ENCODE measurements at regions of chr4 and their contacts with region 1.

Region 1: DNA sequence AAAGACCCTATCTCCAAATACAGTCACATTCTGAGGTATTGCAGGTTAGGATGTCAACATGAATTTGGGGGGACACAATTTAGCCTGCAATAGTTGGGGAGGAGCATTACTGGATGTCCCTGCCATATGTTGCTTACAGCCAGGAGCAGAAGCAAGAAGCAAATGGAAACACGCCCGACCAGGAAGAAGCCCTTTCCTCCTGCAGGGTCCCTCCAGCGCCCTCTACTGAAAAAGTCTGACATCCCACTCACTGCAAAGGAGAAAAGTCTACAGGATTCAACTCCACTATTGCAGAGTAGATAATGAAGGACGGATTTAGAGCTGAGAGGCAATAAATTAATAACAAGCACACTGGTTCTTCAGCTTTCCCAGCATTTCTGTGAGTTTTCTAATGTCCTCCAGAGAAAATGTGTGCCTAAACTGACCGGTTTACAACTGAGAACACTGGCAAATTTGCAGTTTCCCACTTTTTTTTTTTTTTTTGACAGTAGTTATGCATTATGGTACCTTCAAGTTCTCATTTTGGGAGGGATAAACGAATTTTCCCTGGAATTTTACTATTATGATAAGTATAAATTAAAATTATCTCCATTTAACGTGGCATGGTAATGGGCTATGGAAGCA is 31.7 kb downstream of the COQ2 start:
- DNase-seq: peak; percentile 78 to 81 (median 80)
- H3K4me3 ChIP-seq: no peak overlapping the region
- H3K4me3 Mint-ChIP-seq: peak overlapping the region in 4 of 8 donors; percentile 39 to 50 (median 44)
- H3K27ac ChIP-seq: no peak overlapping the region
- H3K27ac Mint-ChIP-seq: peak overlapping the region in 6 of 7 donors; percentile 41 to 78 (median 72)
- H3K4me1 ChIP-seq: peaks cover 23% of the 10 kb centered on the region
- H3K4me1 Mint-ChIP-seq: peaks cover 13 to 29% (median 16%) of the 10 kb centered on the region in 4 donors
- H3K27me3 ChIP-seq: no peaks in the 10 kb centered on the region
- H3K27me3 Mint-ChIP-seq: no peaks in the 10 kb centered on the region

Region 2: GRCh38 chr4:82611982-82612381 is 640.9 kb before region 1 on chr4:
- CTCF ChIA-PET with region 1: no interaction called
- POLR2A ChIA-PET with region 1: no interaction called
- intact Hi-C with region 1: no loop called
- DNase-seq: no peak
- H3K4me3 ChIP-seq: no peak overlapping the region
- H3K4me3 Mint-ChIP-seq: no peak overlapping the region
- H3K27ac ChIP-seq: no peak overlapping the region
- H3K27ac Mint-ChIP-seq: no peak overlapping the region
- H3K4me1 ChIP-seq: no peaks in the 10 kb centered on the region
- H3K4me1 Mint-ChIP-seq: no peaks in the 10 kb centered on the region
- H3K27me3 ChIP-seq: no peaks in the 10 kb centered on the region
- H3K27me3 Mint-ChIP-seq: peaks cover 2 to 8% of the 10 kb centered on the region in 2 donors

Region 3: DNA sequence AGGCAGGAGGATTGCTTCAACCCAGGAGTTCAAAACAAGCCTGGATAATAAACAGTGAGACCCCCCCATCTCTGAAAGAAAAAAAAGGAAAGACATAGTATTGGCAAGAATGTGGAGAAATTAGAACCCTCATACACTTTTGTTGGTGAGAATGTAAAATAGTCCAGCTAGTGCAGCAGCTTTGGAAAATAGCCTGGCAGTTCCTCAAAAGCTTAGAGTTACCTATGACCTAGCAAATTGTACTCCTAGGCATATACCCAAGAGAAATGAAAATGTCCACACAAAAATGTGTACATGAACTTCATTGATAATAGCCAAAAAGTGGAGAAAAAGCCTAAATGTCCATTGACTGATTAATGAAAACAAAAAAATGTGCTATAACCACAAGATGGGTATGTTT is 331.1 kb before region 1 on chr4:
- CTCF ChIA-PET with region 1: no interaction called
- POLR2A ChIA-PET with region 1: no interaction called
- intact Hi-C with region 1: no loop called
- DNase-seq: no peak
- H3K4me3 ChIP-seq: no peak overlapping the region
- H3K4me3 Mint-ChIP-seq: no peak overlapping the region
- H3K27ac ChIP-seq: no peak overlapping the region
- H3K27ac Mint-ChIP-seq: peak overlapping the region in 1 of 7 donors; percentile 70
- H3K4me1 ChIP-seq: no peaks in the 10 kb centered on the region
- H3K4me1 Mint-ChIP-seq: no peaks in the 10 kb centered on the region
- H3K27me3 ChIP-seq: no peaks in the 10 kb centered on the region
- H3K27me3 Mint-ChIP-seq: no peaks in the 10 kb centered on the region

Region 4: GRCh38 chr4:83074086-83074704 is 178.7 kb before region 1 on chr4:
- CTCF ChIA-PET with region 1: interaction called, 123 read pairs
- POLR2A ChIA-PET with region 1: interaction called, 3 read pairs
- intact Hi-C with region 1: loop called (anchors 1 kb)
- DNase-seq: peak; percentile 84 to 89 (median 85)
- H3K4me3 ChIP-seq: no peak overlapping the region
- H3K4me3 Mint-ChIP-seq: peak overlapping the region; percentile 59 to 83 (median 74)
- H3K27ac ChIP-seq: no peak overlapping the region
- H3K27ac Mint-ChIP-seq: peak overlapping the region; percentile 43 to 85 (median 63)
- H3K4me1 ChIP-seq: no peaks in the 10 kb centered on the region
- H3K4me1 Mint-ChIP-seq: peaks cover 4 to 14% (median 5%) of the 10 kb centered on the region in 4 donors
- H3K27me3 ChIP-seq: no peaks in the 10 kb centered on the region
- H3K27me3 Mint-ChIP-seq: no peaks in the 10 kb centered on the region

Region 5: GRCh38 chr4:83097018-83097417 is 155.9 kb before region 1 on chr4:
- CTCF ChIA-PET with region 1: interaction called, 19 read pairs
- POLR2A ChIA-PET with region 1: no interaction called
- intact Hi-C with region 1: no loop called
- DNase-seq: no peak
- H3K4me3 ChIP-seq: no peak overlapping the region
- H3K4me3 Mint-ChIP-seq: peak overlapping the region in 3 of 8 donors; percentile 22 to 37 (median 31)
- H3K27ac ChIP-seq: no peak overlapping the region
- H3K27ac Mint-ChIP-seq: peak overlapping the region in 5 of 7 donors; percentile 14 to 78 (median 44)
- H3K4me1 ChIP-seq: peaks cover 36% of the 10 kb centered on the region
- H3K4me1 Mint-ChIP-seq: peaks cover 27 to 69% (median 43%) of the 10 kb centered on the region in 4 donors
- H3K27me3 ChIP-seq: no peaks in the 10 kb centered on the region
- H3K27me3 Mint-ChIP-seq: no peaks in the 10 kb centered on the region

Region 6: DNA sequence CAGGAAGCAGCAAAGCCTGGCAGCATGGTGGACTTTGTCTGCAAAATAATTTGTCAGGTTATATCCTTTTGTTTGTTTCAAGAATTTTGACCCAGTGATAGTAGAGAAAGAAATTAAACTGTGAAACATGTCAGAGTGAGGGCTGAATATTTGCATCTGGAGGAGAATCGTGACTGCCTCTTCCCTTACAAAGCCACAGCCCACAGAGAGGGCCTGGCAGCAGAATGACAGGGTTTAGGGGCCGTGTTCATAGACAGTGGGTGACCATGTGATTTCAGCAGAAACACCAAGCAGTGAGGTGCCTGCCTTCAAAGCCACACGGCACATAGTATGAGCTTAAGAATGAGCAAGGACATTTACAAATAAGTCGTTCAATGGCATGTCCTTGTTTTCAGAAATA is 113.9 kb before region 1 on chr4:
- CTCF ChIA-PET with region 1: interaction called, 13 read pairs
- POLR2A ChIA-PET with region 1: no interaction called
- intact Hi-C with region 1: no loop called
- DNase-seq: no peak
- H3K4me3 ChIP-seq: no peak overlapping the region
- H3K4me3 Mint-ChIP-seq: no peak overlapping the region
- H3K27ac ChIP-seq: no peak overlapping the region
- H3K27ac Mint-ChIP-seq: peak overlapping the region in 5 of 7 donors; percentile 48 to 74 (median 66)
- H3K4me1 ChIP-seq: peaks cover 12% of the 10 kb centered on the region
- H3K4me1 Mint-ChIP-seq: peaks cover 13 to 26% (median 17%) of the 10 kb centered on the region in 4 donors
- H3K27me3 ChIP-seq: no peaks in the 10 kb centered on the region
- H3K27me3 Mint-ChIP-seq: no peaks in the 10 kb centered on the region

Region 7: DNA sequence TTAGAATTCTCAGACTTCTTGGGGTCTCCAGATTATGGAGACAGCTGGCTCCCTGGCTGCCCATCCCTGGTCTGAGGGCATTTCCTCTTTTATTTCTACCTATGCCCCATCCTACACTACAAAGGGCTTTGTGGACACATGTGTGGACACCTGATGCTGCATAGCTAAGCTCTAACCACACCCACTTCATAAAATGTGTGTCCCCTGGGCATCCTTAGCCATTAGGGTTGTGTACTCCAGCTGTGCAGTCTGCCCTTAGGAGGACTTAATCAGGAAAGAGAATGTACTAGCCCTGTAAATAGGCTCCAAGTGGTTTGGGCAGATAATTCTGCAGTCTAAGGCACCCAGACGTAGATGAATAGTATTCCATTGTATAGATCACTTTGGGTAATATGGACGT is 15.3 kb before region 1 on chr4:
- CTCF ChIA-PET with region 1: interaction called, 12 read pairs
- POLR2A ChIA-PET with region 1: interaction called, 4 read pairs
- intact Hi-C with region 1: no loop called
- DNase-seq: no peak
- H3K4me3 ChIP-seq: no peak overlapping the region
- H3K4me3 Mint-ChIP-seq: peak overlapping the region in 1 of 8 donors; percentile 12
- H3K27ac ChIP-seq: no peak overlapping the region
- H3K27ac Mint-ChIP-seq: no peak overlapping the region
- H3K4me1 ChIP-seq: peaks cover 41% of the 10 kb centered on the region
- H3K4me1 Mint-ChIP-seq: peaks cover 38 to 60% (median 49%) of the 10 kb centered on the region in 4 donors
- H3K27me3 ChIP-seq: no peaks in the 10 kb centered on the region
- H3K27me3 Mint-ChIP-seq: peaks cover 0 to 2% of the 10 kb centered on the region in 2 donors

Region 8: GRCh38 chr4:83890816-83891215 is 637.9 kb after region 1 on chr4:
- CTCF ChIA-PET with region 1: no interaction called
- POLR2A ChIA-PET with region 1: no interaction called
- intact Hi-C with region 1: no loop called
- DNase-seq: no peak
- H3K4me3 ChIP-seq: no peak overlapping the region
- H3K4me3 Mint-ChIP-seq: no peak overlapping the region
- H3K27ac ChIP-seq: no peak overlapping the region
- H3K27ac Mint-ChIP-seq: no peak overlapping the region
- H3K4me1 ChIP-seq: no peaks in the 10 kb centered on the region
- H3K4me1 Mint-ChIP-seq: no peaks in the 10 kb centered on the region
- H3K27me3 ChIP-seq: no peaks in the 10 kb centered on the region
- H3K27me3 Mint-ChIP-seq: peaks cover 0 to 11% of the 10 kb centered on the region in 2 donors

Region 9: DNA sequence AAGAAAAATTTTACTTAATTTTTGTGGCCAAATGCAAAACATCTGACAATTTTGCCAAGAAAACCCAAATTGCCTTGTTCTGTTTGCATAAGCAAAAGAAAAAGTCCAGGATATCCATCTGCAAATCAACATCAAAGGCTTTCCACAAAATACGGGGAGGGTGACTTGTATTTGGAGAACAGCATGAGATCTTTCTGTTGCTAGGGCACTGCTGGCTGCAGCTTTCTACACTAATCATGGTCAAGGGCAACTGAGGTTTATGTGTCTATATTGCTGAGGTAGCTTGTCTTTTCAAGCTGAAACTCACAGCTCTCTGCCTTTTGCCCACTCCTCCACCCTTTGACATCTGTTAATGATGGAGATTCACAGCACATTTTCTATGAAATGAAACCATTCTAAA is 857.1 kb after region 1 on chr4:
- CTCF ChIA-PET with region 1: no interaction called
- POLR2A ChIA-PET with region 1: no interaction called
- intact Hi-C with region 1: no loop called
- DNase-seq: no peak
- H3K4me3 ChIP-seq: no peak overlapping the region
- H3K4me3 Mint-ChIP-seq: no peak overlapping the region
- H3K27ac ChIP-seq: no peak overlapping the region
- H3K27ac Mint-ChIP-seq: no peak overlapping the region
- H3K4me1 ChIP-seq: no peaks in the 10 kb centered on the region
- H3K4me1 Mint-ChIP-seq: no peaks in the 10 kb centered on the region
- H3K27me3 ChIP-seq: no peaks in the 10 kb centered on the region
- H3K27me3 Mint-ChIP-seq: peaks cover 0 to 3% of the 10 kb centered on the region in 2 donors